Panc1 (cell line): ENCODE measurements at regions of chr2 and their contacts with region 1.

Region 1: DNA sequence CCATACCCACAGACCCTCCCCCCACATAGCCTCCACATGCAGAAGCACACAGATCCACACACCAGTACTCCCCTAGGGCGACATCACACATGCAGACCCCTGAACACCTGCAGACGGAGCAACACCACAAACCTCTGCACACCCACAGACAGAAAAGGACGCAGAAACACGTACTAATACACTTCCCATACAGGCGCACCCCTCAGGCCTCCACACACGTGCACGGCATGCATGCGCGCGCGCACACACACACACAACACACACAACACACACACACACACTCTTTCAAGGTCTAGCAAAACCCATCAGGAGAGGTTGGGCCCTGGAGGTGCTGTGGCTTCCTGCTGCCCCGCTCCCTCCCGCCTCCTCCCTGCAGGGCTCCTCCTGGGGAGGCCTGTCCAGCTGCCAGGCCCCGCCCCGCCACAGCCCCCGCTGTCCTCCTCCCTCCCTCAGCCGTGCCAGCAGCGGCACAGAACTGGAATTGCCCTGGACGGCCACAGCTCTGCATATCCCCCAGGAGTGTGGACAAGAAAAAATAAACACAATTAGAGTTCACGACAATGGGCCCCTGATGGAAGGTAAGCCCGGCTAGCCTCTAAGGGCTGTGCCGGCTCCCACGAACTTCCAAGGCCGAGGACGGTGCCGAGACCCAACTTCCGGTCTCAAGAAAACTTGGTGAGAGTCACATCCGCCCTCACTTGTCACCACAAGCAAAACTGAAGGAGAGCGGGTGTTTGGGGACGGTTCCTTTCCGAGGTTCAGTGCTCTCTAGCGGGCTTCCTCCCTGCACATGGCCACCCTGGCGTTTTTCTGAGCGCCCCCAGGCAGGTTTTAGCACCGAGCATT is 6.8 kb downstream of the ZFP36L2 start:
- DNase-seq: peak; percentile 77
- ATAC-seq: peak; percentile 86
- H3K4me3 ChIP-seq: peak overlapping the region; percentile 66 to 90
- H3K27ac ChIP-seq: peak overlapping the region; percentile 91
- H3K4me1 ChIP-seq: peaks cover 47% of the 10 kb centered on the region
- H3K27me3 ChIP-seq: no peaks in the 10 kb centered on the region
- CTCF ChIP-seq: no peak

Region 2: GRCh38 chr2:42494355-42495233 is 725.0 kb before region 1 on chr2:
- CTCF ChIA-PET with region 1: no interaction called
- POLR2A ChIA-PET with region 1: no interaction called
- in situ Hi-C with region 1: no loop called
- intact Hi-C with region 1: no loop called
- DNase-seq: peak; percentile 83
- ATAC-seq: peak; percentile 73
- H3K4me3 ChIP-seq: peak overlapping the region; percentile 93 to 94
- H3K27ac ChIP-seq: peak overlapping the region; percentile 83
- H3K4me1 ChIP-seq: peaks cover 24% of the 10 kb centered on the region
- H3K27me3 ChIP-seq: no peaks in the 10 kb centered on the region
- CTCF ChIP-seq: peak; percentile 94

Region 3: DNA sequence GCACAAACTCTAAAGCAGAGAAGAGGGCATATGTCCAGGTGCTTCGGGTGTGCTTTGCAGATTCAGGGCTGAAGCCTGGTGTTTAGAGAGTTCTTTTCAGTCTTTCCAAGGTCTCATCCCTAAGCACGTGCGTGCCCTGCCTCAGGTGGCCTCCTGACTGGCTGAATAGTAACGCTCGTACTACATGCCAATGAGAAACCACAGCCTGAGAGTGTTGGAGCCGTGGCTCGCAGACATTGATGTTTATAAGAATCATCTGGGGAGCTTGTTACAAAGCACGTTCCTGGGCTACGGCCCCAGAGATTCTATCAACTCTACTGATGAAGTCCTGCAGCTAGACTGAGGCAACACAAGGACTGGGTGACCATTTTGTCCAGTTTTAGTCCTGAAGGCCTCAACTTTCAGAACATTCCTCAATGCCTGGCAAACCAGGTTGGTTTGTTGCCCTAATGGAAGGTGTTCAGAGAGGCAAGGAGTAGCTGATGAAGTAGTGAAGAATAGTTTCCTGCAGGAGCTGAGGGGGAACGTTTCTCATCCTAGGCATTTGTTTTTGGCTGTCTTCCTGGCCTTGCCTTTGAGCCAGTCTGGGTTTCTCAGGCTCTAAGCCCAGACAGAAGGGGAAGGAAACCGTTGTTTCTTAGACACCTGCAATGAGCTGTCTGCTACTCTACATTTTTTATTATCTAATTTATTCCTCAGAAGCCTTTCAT is 395.7 kb before region 1 on chr2:
- CTCF ChIA-PET with region 1: no interaction called
- POLR2A ChIA-PET with region 1: no interaction called
- in situ Hi-C with region 1: no loop called
- intact Hi-C with region 1: no loop called
- DNase-seq: no peak
- ATAC-seq: no peak
- H3K4me3 ChIP-seq: no peak overlapping the region
- H3K27ac ChIP-seq: no peak overlapping the region
- H3K4me1 ChIP-seq: peaks cover 4% of the 10 kb centered on the region
- H3K27me3 ChIP-seq: no peaks in the 10 kb centered on the region
- CTCF ChIP-seq: no peak

Region 4: DNA sequence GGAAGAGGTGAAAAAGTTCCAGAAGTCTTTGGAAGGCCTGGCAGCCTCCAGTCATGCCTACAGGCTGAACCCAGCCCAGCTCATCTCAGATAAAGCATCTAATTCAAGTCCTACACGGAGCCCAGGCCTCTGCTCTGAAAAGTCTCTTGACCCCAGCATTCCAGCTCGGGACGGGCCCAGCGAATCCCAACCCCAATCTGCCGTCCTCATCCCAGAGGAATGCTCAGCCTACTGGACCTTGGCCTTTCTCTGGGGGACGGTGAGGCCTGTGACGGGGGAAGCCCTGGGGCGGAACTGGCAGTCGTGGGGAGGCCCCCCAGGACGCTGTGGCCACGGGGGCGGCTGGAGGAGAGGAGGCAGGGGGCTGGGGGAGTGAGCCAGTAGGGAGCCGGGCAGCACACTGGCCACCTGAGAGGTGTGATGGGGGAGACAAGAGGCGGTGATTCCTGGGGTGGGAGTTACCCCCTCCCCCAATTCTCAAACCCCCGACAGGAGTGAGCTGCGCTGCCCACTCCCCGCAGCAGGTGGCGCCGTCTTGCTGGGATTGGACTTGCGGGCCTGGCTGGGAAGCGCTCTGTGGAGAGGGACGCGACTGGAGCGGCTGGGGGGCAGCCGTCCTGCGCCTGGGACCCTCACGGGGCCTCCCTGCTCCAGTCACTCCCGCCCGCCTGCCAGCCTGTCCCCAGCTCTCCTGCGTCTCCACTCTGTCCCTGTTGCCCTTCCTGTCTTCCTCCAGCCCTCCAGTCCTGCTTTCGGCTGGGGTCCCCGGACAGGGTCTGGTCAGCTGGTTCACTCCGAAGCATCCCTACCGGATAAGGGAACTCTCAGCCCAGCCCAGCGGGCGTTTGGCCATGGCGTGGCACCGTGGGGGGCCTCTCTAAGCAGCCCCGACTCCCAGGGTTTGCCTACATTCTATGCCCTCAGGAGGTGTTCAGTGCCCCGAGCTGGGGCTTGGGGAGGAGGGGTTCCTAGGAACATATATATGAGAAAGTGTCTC is 244.6 kb before region 1 on chr2:
- CTCF ChIA-PET with region 1: interaction called, 7 read pairs
- POLR2A ChIA-PET with region 1: no interaction called
- in situ Hi-C with region 1: no loop called
- intact Hi-C with region 1: loop called (anchors 5 kb)
- DNase-seq: peak; percentile 10
- ATAC-seq: peak; percentile 85
- H3K4me3 ChIP-seq: peak overlapping the region; percentile 12 to 36
- H3K27ac ChIP-seq: peak overlapping the region; percentile 55; the same call in 1 of the 2 replicates
- H3K4me1 ChIP-seq: peaks cover 3% of the 10 kb centered on the region; the same call in 1 of the 2 replicates
- H3K27me3 ChIP-seq: no peaks in the 10 kb centered on the region
- CTCF ChIP-seq: peak; percentile 95

Region 5: DNA sequence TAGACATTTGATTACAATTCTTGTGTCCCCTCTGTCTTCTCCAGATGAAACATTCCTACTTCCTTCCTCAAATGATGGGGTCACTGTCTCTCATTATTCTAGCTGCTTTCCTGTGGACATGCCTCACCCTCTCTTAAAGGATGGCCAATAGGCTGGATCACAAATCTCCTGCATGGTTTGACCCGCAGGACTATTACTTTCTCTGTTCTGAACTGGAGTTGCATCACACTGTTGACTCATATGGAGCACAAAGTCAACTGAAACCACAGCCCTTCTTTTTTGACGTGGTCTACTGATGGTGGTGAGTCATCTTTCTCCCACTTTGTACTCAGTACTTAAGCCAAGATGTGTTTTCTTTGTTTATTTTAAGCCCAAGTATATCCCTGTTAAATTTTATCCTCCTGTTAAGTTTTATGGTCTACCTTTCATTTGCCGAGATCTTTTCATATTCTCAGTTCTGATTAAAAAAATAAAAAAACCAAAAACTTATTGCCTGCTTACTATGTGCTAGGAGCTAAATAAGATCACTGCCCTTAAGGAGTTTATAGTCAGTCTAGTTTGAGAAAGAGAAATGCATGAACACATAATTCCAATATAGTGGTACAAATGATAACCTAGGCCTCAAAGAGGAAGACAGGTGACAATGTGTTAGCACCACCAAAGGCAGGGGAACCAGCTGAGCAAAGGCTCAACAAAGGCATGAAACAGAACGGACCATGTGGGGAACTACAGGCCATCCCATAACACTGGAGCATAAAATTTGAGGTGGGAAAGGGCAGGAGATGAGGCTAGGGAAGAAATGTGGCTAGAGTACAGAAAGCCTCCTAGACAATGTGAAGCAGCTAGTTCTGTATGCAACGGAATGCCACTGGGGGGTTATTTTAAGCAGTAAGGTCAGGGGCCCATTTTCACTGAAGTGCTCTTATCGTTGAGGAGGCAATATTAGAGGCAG is 74.4 kb after region 1 on chr2:
- CTCF ChIA-PET with region 1: no interaction called
- POLR2A ChIA-PET with region 1: no interaction called
- in situ Hi-C with region 1: no loop called
- intact Hi-C with region 1: no loop called
- DNase-seq: peak; percentile 69
- ATAC-seq: peak; percentile 87
- H3K4me3 ChIP-seq: no peak overlapping the region
- H3K27ac ChIP-seq: peak overlapping the region; percentile 31; the same call in 1 of the 2 replicates
- H3K4me1 ChIP-seq: peaks cover 6% of the 10 kb centered on the region
- H3K27me3 ChIP-seq: no peaks in the 10 kb centered on the region
- CTCF ChIP-seq: no peak

Region 6: DNA sequence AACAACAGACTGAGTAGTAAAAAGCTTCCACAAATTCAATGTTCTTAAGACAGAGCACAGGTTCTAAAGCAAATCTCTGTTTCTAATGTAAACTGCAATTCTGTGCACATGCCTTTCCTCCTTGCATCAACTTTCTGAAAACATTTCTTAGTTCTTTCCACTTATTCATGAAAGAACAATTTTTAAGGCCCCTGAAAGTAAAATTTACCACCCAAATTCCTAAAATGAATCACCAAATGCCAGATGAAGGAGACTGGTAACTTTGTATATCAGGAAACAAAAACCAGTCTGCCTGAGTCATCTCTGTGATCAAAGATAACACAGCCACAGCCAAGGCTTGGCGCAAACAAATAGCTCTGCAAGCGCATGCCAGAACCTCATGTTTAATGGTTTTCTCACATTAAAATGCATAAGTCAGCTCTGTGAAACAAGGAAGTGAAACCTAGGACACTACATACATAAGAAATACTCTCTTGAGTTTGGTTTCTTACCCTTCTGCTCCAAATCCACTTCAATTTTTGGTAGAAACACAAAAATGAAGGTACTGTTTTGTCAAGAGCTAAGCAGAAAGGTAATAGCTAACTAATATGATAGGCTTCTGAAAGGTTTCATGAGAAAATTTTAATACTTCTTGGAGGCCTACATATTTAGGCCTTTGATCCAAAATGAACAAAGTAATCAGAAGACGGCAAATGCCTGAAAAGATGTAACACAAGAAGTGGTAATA is 206.9 kb after region 1 on chr2:
- CTCF ChIA-PET with region 1: no interaction called
- POLR2A ChIA-PET with region 1: no interaction called
- in situ Hi-C with region 1: no loop called
- intact Hi-C with region 1: no loop called
- DNase-seq: no peak
- ATAC-seq: peak; percentile 97
- H3K4me3 ChIP-seq: no peak overlapping the region
- H3K27ac ChIP-seq: peak overlapping the region; percentile 76
- H3K4me1 ChIP-seq: peaks cover 20% of the 10 kb centered on the region
- H3K27me3 ChIP-seq: no peaks in the 10 kb centered on the region
- CTCF ChIP-seq: no peak